ENCODE measurements at regions of chr6 and their contacts with region 1.

Region 1: GRCh38 chr6:37566111-37566949 is 66.6 kb upstream of the CCDC167 start:
- DNase-seq: peak; percentile 74 to 82
- ATAC-seq: peak; percentile 83 to 99 (median 99)
- H3K4me3 ChIP-seq: peak overlapping the region; percentile 11
- H3K4me3 Mint-ChIP-seq: peak overlapping the region; percentile 60
- H3K27ac ChIP-seq: no peak overlapping the region
- H3K27ac Mint-ChIP-seq: peak overlapping the region in 1 of 2 donors; percentile 8
- H3K4me1 ChIP-seq: peaks cover 23% of the 10 kb centered on the region
- H3K4me1 Mint-ChIP-seq: peaks cover 4 to 11% of the 10 kb centered on the region in 2 donors
- H3K27me3 ChIP-seq: peaks cover 6% of the 10 kb centered on the region
- H3K27me3 Mint-ChIP-seq: peaks cover 22 to 37% of the 10 kb centered on the region in 2 donors
- CTCF ChIP-seq: peak; percentile 99

Region 2: DNA sequence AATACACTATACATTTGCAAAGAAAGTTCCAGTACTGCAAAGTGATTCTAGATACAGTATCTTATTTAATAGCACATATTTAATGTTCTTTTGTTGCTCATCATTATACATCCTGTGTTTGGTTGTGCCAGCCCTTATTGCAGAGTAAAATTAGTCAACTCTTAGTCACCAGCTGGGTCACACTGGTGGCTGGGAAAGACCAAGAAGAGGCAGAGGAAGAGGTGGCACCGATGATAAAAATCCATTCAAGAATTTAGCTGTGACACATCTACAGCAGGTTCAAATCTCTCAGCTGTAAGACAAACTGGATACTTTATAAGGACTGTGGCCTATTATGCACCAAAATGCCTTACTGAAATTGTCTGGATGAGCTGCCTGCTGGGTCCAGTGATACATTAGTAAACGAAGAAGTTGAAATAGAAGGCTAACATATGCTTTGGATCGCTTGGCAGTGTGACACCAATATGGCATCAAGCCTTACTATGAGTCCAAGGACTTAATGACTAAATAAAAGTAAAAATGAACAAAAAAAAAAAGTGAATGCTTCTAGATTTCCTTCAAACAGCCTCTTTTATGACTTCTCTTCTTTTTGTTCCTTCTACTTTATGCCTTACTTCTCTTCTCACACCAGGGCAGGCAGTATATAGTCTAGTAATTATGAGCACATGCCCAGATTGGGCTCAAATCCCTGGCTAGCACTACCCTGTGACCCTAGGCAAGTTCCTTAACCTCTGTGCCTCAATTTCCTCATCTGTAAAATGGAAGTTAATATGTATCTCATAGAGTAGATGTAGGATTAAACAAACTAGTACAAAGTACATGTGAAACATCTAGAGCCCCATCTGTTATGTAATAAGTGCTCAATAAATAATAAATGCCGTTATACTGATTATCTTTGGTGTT is 241.9 kb before region 1 on chr6:
- intact Hi-C with region 1: loop called (anchors 1 kb)
- DNase-seq: no peak
- ATAC-seq: no peak
- H3K4me3 ChIP-seq: no peak overlapping the region
- H3K4me3 Mint-ChIP-seq: no peak overlapping the region
- H3K27ac ChIP-seq: no peak overlapping the region
- H3K27ac Mint-ChIP-seq: no peak overlapping the region
- H3K4me1 ChIP-seq: no peaks in the 10 kb centered on the region
- H3K4me1 Mint-ChIP-seq: peaks cover 0 to 5% of the 10 kb centered on the region in 2 donors
- H3K27me3 ChIP-seq: no peaks in the 10 kb centered on the region
- H3K27me3 Mint-ChIP-seq: no peaks in the 10 kb centered on the region
- CTCF ChIP-seq: no peak

Region 3: GRCh38 chr6:37483917-37484785 is 82.2 kb before region 1 on chr6:
- intact Hi-C with region 1: loop called (anchors 1 kb)
- DNase-seq: peak; percentile 74 to 90
- ATAC-seq: peak; percentile 83 to 95 (median 92)
- H3K4me3 ChIP-seq: no peak overlapping the region
- H3K4me3 Mint-ChIP-seq: no peak overlapping the region
- H3K27ac ChIP-seq: no peak overlapping the region
- H3K27ac Mint-ChIP-seq: no peak overlapping the region
- H3K4me1 ChIP-seq: peaks cover 13% of the 10 kb centered on the region
- H3K4me1 Mint-ChIP-seq: peaks cover 7 to 14% of the 10 kb centered on the region in 2 donors
- H3K27me3 ChIP-seq: no peaks in the 10 kb centered on the region
- H3K27me3 Mint-ChIP-seq: no peaks in the 10 kb centered on the region
- CTCF ChIP-seq: peak; percentile 91

Measured in natural killer cell (primary cell).